B cell (primary cell): ENCODE measurements at regions of chr1 and their contacts with region 1.

Region 1: GRCh38 chr1:76294482-76295194 is 220.1 kb downstream of the ST6GALNAC3 start:
- DNase-seq: peak; percentile 19
- ATAC-seq: peak; percentile 91
- H3K4me3 ChIP-seq: peak overlapping the region in 3 of 5 experiments; percentile 12 to 25 (median 24)
- H3K4me3 Mint-ChIP-seq: peak overlapping the region; percentile 68
- H3K27ac ChIP-seq: peak overlapping the region; percentile 43 to 69
- H3K27ac Mint-ChIP-seq: peak overlapping the region; percentile 67
- H3K4me1 ChIP-seq: peaks cover 10 to 52% of the 10 kb centered on the region in 2 donors
- H3K4me1 Mint-ChIP-seq: peaks cover 45% of the 10 kb centered on the region
- H3K27me3 ChIP-seq: no peaks in the 10 kb centered on the region
- H3K27me3 Mint-ChIP-seq: no peaks in the 10 kb centered on the region
- CTCF ChIP-seq: no peak

Region 2: DNA sequence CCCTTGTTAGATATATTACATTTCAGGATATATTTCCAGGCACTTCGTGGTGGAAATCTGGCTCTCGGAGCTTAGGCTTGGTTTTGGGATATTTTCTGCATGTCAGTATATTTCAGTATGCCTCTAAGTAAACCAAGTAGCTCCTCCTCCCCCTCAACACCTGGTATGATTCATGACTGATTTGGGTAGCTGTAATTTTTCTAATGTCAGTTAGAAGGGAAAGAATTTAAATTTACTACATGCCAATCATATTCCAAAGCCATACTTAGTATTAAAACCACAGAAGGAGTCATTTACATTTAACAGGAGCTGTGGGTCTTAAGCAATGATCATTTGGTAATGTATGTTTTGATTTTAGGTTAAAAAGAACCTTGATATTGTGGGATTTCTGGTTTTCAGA is 179.5 kb before region 1 on chr1:
- CTCF ChIA-PET with region 1: no interaction called
- POLR2A ChIA-PET with region 1: no interaction called
- intact Hi-C with region 1: no loop called
- DNase-seq: no peak
- ATAC-seq: no peak
- H3K4me3 ChIP-seq: no peak overlapping the region
- H3K4me3 Mint-ChIP-seq: no peak overlapping the region
- H3K27ac ChIP-seq: no peak overlapping the region
- H3K27ac Mint-ChIP-seq: no peak overlapping the region
- H3K4me1 ChIP-seq: peaks cover 6 to 10% of the 10 kb centered on the region in 2 donors
- H3K4me1 Mint-ChIP-seq: peaks cover 11% of the 10 kb centered on the region
- H3K27me3 ChIP-seq: no peaks in the 10 kb centered on the region
- H3K27me3 Mint-ChIP-seq: no peaks in the 10 kb centered on the region
- CTCF ChIP-seq: no peak

Region 3: DNA sequence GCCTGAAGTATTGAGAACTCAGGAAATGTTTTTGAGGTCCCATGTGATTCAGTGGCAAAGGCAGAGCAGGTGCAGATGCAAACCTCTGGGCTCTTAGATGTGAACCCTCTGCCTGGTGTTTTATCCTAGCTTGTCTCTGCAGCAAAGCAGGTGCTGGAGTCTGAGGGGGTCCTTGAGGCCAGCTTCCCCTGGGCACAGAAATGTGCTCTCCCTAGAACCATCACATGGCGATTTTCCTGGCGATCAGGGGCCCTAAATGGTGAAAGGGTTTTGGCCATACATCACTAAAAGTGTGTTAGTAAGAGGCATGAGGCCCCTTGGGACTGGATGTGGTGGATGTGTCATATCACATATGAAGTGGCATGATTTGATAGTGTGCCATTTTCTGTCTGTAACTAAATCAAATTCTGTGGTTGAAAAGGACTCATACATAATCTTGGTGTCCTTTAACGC is 75.2 kb before region 1 on chr1:
- CTCF ChIA-PET with region 1: no interaction called
- POLR2A ChIA-PET with region 1: interaction called, 3 read pairs
- intact Hi-C with region 1: loop called (anchors 2 kb)
- DNase-seq: peak; percentile 57
- ATAC-seq: peak; percentile 82
- H3K4me3 ChIP-seq: peak overlapping the region in 2 of 5 experiments; percentile 10 to 23
- H3K4me3 Mint-ChIP-seq: peak overlapping the region; percentile 73
- H3K27ac ChIP-seq: peak overlapping the region; percentile 25 to 65
- H3K27ac Mint-ChIP-seq: peak overlapping the region; percentile 87
- H3K4me1 ChIP-seq: peaks cover 13 to 25% of the 10 kb centered on the region in 2 donors
- H3K4me1 Mint-ChIP-seq: peaks cover 17% of the 10 kb centered on the region
- H3K27me3 ChIP-seq: no peaks in the 10 kb centered on the region
- H3K27me3 Mint-ChIP-seq: no peaks in the 10 kb centered on the region
- CTCF ChIP-seq: no peak